PC-3 (cell line): ENCODE measurements at regions of chr1 and their contacts with region 1.

Region 1: GRCh38 chr1:244451951-244452795 is 464 bp upstream of the ADSS2 start:
- DNase-seq: peak; percentile 100
- ATAC-seq: peak; percentile 95
- H3K4me3 ChIP-seq: peak overlapping the region; percentile 96
- H3K27ac ChIP-seq: peak overlapping the region; percentile 78; the same call in 1 of the 2 replicates
- H3K4me1 ChIP-seq: peaks cover 33% of the 10 kb centered on the region
- H3K27me3 ChIP-seq: no peaks in the 10 kb centered on the region
- CTCF ChIP-seq: peak; percentile 55

Region 2: DNA sequence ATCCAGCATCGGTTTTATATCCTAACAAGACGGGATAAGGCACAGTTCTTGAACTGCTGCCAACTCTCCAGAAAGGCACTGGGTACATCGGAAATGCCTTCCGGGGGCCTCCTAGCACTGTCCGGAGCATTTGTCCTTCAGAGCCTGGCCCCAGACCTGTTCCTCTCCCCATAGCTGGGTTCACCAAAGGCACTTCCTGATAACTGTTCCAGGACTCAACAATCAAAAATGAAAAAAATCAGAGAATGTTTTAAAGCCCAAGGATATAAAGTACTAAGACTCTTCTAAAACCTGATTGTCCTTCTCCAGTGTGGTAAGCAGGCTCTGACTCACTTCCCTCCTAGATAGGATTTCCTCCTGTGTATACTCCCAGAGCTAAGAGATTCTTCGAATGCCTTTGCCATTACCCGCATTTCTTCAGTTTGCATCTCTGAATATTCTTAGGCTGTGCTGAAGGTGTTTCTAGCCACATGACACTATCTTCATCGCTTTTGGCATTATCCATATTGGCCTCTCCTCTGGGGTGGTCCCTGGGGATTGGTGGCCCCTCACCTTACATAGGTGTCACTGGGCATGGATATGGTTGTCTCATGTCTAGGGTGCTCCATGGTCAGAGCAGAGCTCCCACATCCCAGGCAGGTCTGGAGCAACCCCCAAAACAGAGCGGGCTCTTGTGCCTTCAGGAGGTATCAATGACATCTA is 288.2 kb before region 1 on chr1:
- CTCF ChIA-PET with region 1: no interaction called
- POLR2A ChIA-PET with region 1: no interaction called
- intact Hi-C with region 1: no loop called
- DNase-seq: peak; percentile 99
- ATAC-seq: peak; percentile 92
- H3K4me3 ChIP-seq: peak overlapping the region; percentile 45
- H3K27ac ChIP-seq: peak overlapping the region; percentile 78
- H3K4me1 ChIP-seq: peaks cover 38% of the 10 kb centered on the region
- H3K27me3 ChIP-seq: no peaks in the 10 kb centered on the region
- CTCF ChIP-seq: no peak

Region 3: DNA sequence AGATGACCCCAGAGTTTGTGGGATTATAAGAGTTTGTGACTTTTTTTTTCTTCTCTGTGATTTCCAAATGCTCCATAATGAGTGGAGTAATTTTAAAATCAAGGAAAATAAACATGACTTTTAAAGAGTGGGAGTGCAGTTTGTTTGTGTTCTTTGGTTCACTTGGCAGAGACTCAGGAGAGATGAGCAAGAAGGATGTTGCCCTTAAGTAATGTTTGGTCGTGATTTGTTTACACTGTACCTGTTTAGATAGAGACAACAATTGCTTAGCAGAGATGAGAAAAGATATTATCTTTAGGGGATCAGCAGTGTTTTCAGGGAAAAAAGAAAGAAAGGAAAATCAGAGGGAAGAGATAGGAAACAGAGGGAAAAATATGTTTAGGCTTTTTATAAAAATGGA is 171.3 kb before region 1 on chr1:
- CTCF ChIA-PET with region 1: no interaction called
- POLR2A ChIA-PET with region 1: no interaction called
- intact Hi-C with region 1: loop called (anchors 2 kb)
- DNase-seq: peak; percentile 78
- ATAC-seq: peak; percentile 87
- H3K4me3 ChIP-seq: no peak overlapping the region
- H3K27ac ChIP-seq: no peak overlapping the region
- H3K4me1 ChIP-seq: peaks cover 14% of the 10 kb centered on the region
- H3K27me3 ChIP-seq: no peaks in the 10 kb centered on the region
- CTCF ChIP-seq: no peak

Region 4: DNA sequence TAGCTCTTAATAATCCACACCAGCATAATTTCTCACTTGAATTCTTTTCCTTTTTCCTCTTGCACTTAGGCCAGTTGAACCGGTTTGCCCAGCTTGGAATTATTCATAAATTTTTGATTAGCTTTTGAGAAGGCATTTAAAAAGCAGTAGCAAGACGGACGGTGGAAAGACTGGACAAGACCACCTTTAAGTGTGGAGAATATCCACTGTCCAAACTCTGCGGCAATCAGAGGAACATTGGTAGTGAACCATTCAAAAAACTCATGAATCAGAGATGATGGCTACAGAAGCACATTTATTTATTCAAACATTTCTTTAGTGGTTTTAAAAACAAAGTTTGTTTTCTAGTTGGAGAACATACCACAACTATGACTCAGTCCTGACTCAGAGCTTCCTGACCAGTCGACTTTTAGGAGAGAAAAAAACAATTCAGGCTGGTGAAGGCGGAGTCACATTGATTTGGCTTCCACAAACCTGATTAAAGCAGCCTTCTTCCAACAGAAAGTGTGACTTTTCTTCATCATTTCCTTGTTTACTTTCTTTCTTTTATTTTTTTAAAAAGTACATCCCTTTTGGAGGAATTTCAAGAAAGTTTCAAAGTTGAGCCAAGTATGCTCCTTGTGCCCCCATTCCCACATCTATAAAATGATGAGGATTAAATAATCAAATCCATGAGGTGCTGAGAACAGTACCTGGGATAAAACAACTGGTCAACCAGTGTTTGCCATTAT is 129.2 kb before region 1 on chr1:
- CTCF ChIA-PET with region 1: no interaction called
- POLR2A ChIA-PET with region 1: no interaction called
- intact Hi-C with region 1: loop called (anchors 1 kb)
- DNase-seq: peak; percentile 99
- ATAC-seq: peak; percentile 92
- H3K4me3 ChIP-seq: peak overlapping the region; percentile 52
- H3K27ac ChIP-seq: peak overlapping the region; percentile 87
- H3K4me1 ChIP-seq: peaks cover 38% of the 10 kb centered on the region
- H3K27me3 ChIP-seq: no peaks in the 10 kb centered on the region
- CTCF ChIP-seq: no peak

Region 5: DNA sequence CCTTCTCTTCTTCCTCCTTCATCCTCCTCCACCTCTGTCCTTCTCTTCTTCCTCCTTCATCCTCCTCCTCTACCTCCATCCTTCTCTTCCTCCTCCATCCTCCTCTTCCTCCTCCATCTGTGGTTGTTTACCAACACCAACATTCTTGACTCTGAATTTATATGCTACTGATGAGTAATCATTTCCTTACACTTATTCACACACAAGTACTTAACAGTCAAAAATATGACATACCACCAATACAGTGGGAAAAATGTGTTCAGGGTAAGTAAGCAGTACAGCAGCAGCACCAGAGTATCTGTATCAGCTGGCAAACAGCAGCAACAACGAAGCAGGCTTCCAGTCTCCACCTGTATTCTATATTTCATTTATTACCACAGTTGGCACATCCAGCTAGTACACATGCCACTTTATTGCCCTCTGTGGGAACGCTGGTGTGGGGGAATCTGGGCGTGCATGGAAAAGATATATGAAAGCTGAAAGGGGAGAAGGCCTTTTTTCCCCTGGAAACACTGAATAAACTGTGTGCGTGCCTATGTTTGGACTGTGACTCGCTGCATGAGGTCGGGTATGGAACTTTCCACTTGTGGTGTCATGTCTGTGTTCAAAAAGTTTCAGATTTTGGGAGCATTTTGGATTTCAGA is 16.5 kb before region 1 on chr1:
- CTCF ChIA-PET with region 1: no interaction called
- POLR2A ChIA-PET with region 1: no interaction called
- intact Hi-C with region 1: loop called (anchors 2 kb)
- DNase-seq: peak; percentile 81
- ATAC-seq: peak; percentile 72
- H3K4me3 ChIP-seq: peak overlapping the region; percentile 13; the same call in 1 of the 2 replicates
- H3K27ac ChIP-seq: peak overlapping the region; percentile 86
- H3K4me1 ChIP-seq: peaks cover 37% of the 10 kb centered on the region
- H3K27me3 ChIP-seq: no peaks in the 10 kb centered on the region
- CTCF ChIP-seq: no peak

Region 6: GRCh38 chr1:244536316-244536715 is 84.1 kb after region 1 on chr1:
- CTCF ChIA-PET with region 1: no interaction called
- POLR2A ChIA-PET with region 1: no interaction called
- intact Hi-C with region 1: no loop called
- DNase-seq: no peak
- ATAC-seq: no peak
- H3K4me3 ChIP-seq: no peak overlapping the region
- H3K27ac ChIP-seq: no peak overlapping the region
- H3K4me1 ChIP-seq: no peaks in the 10 kb centered on the region
- H3K27me3 ChIP-seq: no peaks in the 10 kb centered on the region; the same call in 1 of the 2 replicates
- CTCF ChIP-seq: no peak

Region 7: DNA sequence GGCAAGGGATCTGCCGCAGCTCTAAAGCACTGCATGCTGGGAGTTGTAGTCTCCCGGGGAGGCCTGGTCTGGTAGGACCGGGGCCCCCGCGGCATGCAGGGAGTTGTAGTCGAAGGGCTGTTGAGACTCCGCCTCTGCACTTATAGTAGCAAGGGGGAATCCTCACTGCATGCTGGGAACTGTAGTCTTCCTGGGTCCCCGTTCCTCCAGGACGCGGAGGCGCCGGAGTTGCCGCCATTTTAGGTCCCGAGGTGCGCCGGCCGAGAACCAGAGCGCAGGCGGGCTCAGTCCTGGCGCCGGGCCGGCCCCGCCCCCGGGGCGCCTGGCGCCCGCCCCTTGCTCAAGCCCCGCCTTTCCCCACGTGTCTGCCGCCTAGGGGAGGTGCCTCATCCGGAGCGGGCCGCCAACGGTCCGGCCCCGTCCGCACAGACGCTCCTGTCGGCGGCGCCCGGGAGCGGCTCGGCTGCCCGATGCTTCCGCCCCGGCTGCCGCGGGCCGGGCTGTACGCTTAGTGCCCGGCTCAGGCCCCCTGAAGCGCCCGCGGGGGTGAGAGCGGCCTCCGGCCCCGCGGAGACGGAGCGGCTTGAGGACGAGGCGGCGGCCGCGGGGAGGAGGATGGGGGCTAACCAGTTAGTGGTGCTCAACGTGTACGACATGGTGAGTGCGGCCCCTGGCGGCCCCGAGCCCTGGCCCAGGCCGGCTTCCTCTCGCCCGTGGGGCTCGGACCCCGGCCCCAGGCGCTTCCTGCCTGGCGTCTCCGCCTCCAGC is 200.7 kb after region 1 on chr1 and contains the start of gene DESI2:
- CTCF ChIA-PET with region 1: no interaction called
- POLR2A ChIA-PET with region 1: no interaction called
- intact Hi-C with region 1: loop called (anchors 1 kb)
- DNase-seq: peak; percentile 99
- ATAC-seq: peak; percentile 93
- H3K4me3 ChIP-seq: peak within 1 kb of the TSS; percentile 91
- H3K27ac ChIP-seq: peak within 1 kb of the TSS; percentile 30
- H3K4me1 ChIP-seq: peaks cover 27% of the 10 kb centered on the region
- H3K27me3 ChIP-seq: no peaks in the 10 kb centered on the region
- CTCF ChIP-seq: peak; percentile 72
- total RNA-seq, gene DESI2: 58.7 and 81.8 TPM in 2 replicates

Region 8: DNA sequence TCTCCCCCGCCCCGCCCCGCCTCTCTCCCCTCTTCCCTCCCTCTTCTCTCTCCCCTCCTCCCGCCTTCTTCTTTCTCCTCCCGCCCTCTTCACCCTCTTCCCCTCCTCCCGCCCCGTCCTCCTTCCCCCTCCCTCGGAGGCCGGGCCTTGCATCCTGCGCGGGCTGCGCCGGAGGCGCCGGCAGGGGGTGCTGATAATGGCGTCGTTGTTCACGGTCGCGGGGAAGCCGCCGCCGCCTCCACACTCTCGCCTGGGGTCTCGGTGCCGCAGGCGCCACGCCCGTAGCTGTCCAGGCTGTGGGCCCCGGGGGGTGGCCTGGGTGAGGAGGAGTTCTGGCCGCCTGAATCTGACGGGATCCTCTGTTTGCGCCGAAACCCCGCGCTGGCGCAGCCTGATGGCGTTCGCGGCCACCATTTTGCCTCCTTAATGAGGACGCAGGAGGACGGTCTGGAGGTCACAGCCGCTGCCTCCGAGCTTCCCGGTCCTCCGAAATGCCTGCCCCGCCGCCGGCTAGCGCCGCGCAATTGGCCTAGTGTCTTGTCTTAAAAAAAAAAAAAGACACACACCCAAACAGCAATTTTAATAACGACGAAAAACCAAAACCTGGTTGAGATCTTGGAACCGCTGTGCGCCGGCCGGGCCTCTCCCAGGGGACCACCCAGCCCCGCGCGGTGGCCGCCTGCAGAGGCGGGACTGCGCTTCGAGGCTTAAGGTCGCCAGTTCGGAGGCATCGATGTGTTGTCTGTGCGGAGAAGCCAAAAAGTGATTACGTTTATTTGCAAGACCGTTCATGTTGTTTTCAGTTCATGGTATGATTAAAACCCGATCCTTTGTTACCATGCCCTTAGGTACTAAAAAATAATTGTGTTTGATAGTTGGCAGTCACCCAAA is 518.7 kb after region 1 on chr1:
- CTCF ChIA-PET with region 1: no interaction called
- POLR2A ChIA-PET with region 1: no interaction called
- intact Hi-C with region 1: loop called (anchors 10 kb)
- DNase-seq: peak; percentile 96
- ATAC-seq: peak; percentile 66
- H3K4me3 ChIP-seq: peak overlapping the region; percentile 74
- H3K27ac ChIP-seq: peak overlapping the region; percentile 95
- H3K4me1 ChIP-seq: peaks cover 17% of the 10 kb centered on the region
- H3K27me3 ChIP-seq: no peaks in the 10 kb centered on the region
- CTCF ChIP-seq: peak; percentile 65